Activated naive CD4-positive, alpha-beta T cell treated with anti-CD3 and anti-CD28 coated beads, Interleukin-2, amount 10 ng/mL, durations not matched to agents 7 days and 5 days (primary cell): ENCODE measurements at regions of chr12 and their contacts with region 1.

Region 1: DNA sequence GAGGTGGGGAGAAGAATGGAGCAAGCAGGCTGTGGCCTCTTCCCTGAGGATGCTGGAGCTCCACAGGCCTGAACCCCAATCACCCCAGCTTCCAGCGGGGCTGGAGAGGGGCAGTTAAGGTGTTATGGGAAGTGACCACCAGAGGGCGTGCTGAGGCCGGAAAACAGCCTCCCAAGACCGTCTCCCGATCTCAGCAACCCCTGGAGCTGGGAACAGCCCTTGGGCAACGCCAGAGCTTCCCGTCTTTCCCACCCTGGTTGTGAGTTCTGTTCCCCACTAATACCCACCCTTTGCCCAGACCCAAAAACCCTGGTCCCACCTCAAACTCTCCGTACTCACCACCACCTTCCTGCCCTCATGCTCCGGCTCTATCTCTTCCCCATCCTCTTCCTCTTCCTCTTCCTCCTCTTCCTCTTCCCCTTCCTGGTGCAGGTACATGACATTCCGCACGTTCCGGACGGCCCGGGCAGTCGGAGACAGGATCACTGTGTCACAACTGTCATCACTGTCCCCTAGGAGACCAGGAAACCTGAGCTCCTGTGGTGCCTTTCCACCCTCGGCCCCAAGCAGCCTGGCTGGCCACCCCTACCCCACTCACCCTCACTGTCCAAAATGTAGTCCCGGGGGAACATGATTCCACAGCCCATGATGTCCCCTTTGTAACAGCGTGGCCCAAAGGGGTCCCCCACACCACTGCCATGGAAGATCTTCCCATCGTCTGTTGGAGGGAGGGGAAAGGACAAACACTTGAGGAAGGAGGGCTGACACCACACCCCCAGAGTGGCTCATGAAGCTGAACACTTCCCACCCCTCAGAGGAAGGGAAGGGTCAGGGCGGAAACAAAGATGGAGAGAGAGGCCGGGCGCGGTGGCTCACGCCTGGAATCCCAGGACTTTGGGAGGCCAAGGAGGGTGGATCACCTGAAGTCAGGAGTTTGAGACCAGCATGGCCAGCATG is 12.9 kb downstream of the SPRYD3 start:
- DNase-seq: peak; percentile 78
- H3K4me3 Mint-ChIP-seq: no peak overlapping the region
- H3K27ac Mint-ChIP-seq: no peak overlapping the region
- H3K4me1 Mint-ChIP-seq: peaks cover 5% of the 10 kb centered on the region
- H3K27me3 Mint-ChIP-seq: peaks cover 3% of the 10 kb centered on the region

Region 2: GRCh38 chr12:52976147-52977071 is 89.8 kb before region 1 on chr12:
- CTCF ChIA-PET with region 1: no interaction called
- DNase-seq: no peak
- H3K4me3 Mint-ChIP-seq: no peak overlapping the region
- H3K27ac Mint-ChIP-seq: no peak overlapping the region
- H3K4me1 Mint-ChIP-seq: no peaks in the 10 kb centered on the region
- H3K27me3 Mint-ChIP-seq: peaks cover 51% of the 10 kb centered on the region

Region 3: DNA sequence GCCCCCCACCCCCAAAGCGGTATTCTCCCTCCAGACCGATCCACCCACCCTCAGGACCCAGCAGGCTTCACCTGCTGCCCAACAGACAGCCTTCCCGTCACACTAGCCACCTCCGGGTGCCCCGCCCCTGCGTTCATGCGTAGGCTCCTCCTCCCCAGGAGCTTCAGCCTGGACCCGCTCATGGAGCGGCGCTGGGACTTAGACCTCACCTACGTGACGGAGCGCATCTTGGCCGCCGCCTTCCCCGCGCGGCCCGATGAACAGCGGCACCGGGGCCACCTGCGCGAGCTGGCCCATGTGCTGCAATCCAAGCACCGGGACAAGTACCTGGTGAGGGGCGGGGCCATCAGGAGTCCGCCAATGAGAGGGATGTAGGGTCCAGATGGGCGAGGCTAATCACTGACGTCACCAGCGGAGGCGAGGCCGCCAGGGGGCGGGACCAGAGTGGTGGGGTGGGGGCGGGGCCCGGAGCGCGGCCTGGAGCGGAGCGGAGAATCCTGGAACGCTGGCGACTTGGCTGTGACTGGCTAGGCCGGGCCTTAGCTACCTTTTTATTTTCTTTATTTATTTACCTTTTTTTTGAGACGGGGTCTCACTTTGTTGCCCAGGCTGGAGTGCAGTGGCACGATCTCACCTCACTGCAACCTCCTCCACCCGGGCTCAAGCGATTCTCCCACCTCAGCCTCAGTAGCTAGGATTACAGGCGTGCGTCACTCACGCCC is 12.0 kb before region 1 on chr12:
- CTCF ChIA-PET with region 1: interaction called, 28 read pairs
- DNase-seq: peak; percentile 96
- H3K4me3 Mint-ChIP-seq: peak overlapping the region; percentile 91
- H3K27ac Mint-ChIP-seq: peak overlapping the region; percentile 89
- H3K4me1 Mint-ChIP-seq: peaks cover 25% of the 10 kb centered on the region
- H3K27me3 Mint-ChIP-seq: peaks cover 55% of the 10 kb centered on the region

Region 4: GRCh38 chr12:53086361-53086760 is 20.1 kb after region 1 on chr12:
- CTCF ChIA-PET with region 1: interaction called, 47 read pairs
- DNase-seq: no peak
- H3K4me3 Mint-ChIP-seq: no peak overlapping the region
- H3K27ac Mint-ChIP-seq: no peak overlapping the region
- H3K4me1 Mint-ChIP-seq: peaks cover 3% of the 10 kb centered on the region
- H3K27me3 Mint-ChIP-seq: peaks cover 23% of the 10 kb centered on the region

Region 5: DNA sequence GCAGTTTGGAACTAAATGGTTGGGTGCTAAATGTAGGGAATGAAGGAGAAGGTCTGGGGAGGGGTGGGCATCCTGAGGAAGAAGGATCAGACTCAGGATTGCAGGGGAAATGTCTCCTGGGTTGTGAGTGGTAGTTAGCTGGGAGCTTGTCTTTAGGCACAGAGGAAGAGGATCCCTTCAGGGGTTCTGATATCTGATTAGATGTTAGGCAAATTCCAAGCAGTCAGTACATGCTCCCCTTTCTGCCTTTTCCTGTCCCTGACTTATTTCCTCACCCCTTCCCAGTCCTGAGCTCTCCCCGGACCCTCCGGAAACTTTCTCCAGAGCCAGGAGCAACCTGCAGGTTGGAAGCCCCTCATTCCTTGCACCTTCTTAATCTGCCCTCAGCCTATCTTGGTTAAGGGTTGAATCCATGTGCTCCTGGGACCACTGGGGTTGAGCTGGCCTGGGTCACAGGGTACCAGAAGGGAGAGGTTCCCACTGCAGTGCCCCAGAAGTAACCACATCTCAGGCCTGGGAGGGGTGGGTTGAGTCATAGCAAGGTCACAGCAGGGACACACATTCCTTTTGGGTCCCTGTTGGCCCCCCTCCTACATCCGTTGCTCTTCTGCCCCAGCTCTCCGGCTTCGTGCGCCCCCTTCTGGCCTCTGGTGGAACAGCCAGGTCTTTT is 32.9 kb after region 1 on chr12:
- CTCF ChIA-PET with region 1: interaction called, 250 read pairs
- DNase-seq: peak; percentile 92
- H3K4me3 Mint-ChIP-seq: peak overlapping the region; percentile 30
- H3K27ac Mint-ChIP-seq: peak overlapping the region; percentile 34
- H3K4me1 Mint-ChIP-seq: peaks cover 55% of the 10 kb centered on the region
- H3K27me3 Mint-ChIP-seq: peaks cover 52% of the 10 kb centered on the region

Region 6: DNA sequence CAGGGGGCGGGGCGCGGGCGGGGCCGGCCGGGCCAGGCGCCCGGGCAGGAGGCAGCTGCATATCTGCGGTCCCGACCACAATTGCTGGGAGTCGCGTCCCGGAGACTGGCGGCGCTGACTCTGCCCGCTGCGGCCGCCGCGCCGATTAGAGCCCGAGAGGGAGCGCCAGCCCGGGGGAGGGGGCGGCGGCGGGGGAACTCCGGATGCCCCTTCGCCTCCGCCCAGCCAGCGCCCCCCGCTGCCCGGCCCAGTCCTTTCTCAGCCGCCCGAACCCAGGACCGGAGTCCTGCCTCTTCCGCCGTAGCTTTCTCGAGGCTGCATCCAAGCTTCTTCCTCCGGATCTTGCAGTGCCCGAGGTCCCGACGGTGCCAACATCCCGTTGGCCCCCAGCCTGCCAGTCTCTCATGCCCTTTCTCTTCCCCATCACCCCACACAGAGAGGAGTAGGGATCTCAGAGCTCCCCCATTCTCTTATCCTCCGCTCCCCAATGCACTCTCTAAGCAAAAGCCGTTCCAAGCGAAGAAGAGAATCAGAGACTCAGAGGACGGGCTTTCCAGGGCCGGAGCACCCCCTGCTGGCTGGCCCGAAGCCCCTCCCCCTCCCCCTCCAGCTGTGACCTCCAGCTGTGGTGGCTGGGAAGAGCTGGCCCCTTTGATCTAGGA is 278.7 kb after region 1 on chr12:
- CTCF ChIA-PET with region 1: interaction called, 10 read pairs
- DNase-seq: peak; percentile 81
- H3K4me3 Mint-ChIP-seq: peak overlapping the region; percentile 95
- H3K27ac Mint-ChIP-seq: peak overlapping the region; percentile 75
- H3K4me1 Mint-ChIP-seq: peaks cover 16% of the 10 kb centered on the region
- H3K27me3 Mint-ChIP-seq: peaks cover 42% of the 10 kb centered on the region